SK-N-SH (cell line): ENCODE measurements at regions of chr11 and their contacts with region 1.

Region 1: DNA sequence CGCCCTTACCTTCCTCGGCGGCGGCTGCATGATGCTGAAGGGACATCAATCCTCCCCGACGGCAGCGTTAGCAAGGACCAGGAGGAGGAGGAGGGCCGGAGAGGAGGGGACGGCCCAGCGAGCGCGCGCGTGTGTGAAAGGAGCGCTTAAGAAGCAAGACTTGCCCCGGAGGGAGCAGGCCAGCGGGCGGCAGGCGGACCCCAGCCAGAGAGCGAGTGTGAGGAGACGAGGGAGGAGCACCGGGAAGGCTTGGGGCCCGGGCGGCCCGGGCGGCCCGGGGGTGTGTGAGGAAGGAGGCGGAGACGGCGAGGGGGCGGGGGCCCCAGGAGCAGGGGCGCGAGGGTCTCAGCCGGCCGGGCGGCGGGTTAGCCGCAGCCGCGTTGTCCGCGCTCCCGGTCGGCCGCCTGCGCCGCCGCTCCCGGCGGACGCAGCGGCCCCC is 251 bp downstream of the FCHSD2 start:
- DNase-seq: no peak
- H3K4me3 ChIP-seq: peak overlapping the region; percentile 90 to 97
- H3K27ac ChIP-seq: peak overlapping the region; percentile 79 to 95
- H3K4me1 ChIP-seq: peaks cover 0 to 20% of the 10 kb centered on the region in 2 experiments; a peak in 2 of 4 replicates
- H3K27me3 ChIP-seq: no peaks in the 10 kb centered on the region
- CTCF ChIP-seq: no peak
- EP300 ChIP-seq: no peak
- RAD21 ChIP-seq: no peak

Region 2: GRCh38 chr11:73126804-73127480 is 14.9 kb before region 1 on chr11:
- CTCF ChIA-PET with region 1: interaction called, 11 read pairs
- POLR2A ChIA-PET with region 1: no interaction called
- DNase-seq: no peak
- H3K4me3 ChIP-seq: no peak overlapping the region
- H3K27ac ChIP-seq: no peak overlapping the region; a peak in 1 of 4 replicates
- H3K4me1 ChIP-seq: no peaks in the 10 kb centered on the region; a peak in 3 of 4 replicates
- H3K27me3 ChIP-seq: no peaks in the 10 kb centered on the region
- CTCF ChIP-seq: no peak
- EP300 ChIP-seq: no peak
- RAD21 ChIP-seq: no peak

Region 3: DNA sequence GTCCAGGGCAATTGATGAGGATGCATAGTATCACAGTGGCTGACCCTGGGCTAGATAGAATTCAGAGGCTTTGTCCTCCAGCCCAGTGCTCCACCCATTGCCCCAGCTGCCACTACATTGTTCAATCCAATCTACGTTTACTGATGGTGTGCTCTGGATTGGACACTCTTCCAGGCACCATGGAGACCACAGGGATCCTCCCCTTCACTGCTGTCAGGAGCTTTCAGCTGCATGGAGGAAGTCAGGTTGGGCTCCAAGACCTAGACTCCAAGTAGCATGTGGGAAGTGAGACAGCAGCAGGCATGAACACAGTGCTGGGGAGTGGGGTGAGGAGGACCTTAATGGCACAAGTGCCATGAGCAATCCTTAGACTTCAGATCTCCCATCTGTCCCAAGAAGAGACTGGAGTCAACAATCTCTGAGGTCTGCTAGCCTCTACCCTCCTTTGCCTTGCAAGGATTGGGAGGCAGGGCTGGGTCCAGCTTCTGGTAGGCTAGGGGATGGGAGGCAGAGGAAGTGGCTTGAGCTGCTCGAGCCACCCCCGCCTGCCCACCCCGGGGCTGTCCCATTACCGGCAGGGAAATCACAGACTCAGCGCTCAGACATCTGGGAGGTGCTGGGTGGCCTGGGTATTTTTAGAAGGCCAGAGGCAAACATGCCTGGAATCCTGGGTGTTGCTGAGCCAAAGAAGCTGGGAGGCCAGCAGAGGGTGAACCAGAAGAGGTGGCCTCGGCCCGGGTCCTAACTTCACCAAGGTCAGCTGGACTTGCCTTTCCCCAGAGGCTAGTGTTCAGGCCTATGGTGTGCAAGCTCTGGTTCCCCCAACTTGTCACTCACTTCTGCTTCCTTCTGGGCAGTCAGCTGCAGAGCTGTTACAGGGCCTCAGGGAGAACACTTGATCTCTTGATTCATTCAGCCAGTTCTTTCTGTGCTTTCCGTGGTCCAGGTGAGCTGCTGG is 15.5 kb after region 1 on chr11:
- CTCF ChIA-PET with region 1: interaction called, 14 read pairs
- POLR2A ChIA-PET with region 1: no interaction called
- DNase-seq: peak; percentile 21
- H3K4me3 ChIP-seq: no peak overlapping the region
- H3K27ac ChIP-seq: no peak overlapping the region
- H3K4me1 ChIP-seq: peaks cover 9 to 25% of the 10 kb centered on the region in 2 experiments; a peak in 2 of 4 replicates
- H3K27me3 ChIP-seq: no peaks in the 10 kb centered on the region
- CTCF ChIP-seq: no peak
- EP300 ChIP-seq: no peak
- RAD21 ChIP-seq: no peak

Region 4: DNA sequence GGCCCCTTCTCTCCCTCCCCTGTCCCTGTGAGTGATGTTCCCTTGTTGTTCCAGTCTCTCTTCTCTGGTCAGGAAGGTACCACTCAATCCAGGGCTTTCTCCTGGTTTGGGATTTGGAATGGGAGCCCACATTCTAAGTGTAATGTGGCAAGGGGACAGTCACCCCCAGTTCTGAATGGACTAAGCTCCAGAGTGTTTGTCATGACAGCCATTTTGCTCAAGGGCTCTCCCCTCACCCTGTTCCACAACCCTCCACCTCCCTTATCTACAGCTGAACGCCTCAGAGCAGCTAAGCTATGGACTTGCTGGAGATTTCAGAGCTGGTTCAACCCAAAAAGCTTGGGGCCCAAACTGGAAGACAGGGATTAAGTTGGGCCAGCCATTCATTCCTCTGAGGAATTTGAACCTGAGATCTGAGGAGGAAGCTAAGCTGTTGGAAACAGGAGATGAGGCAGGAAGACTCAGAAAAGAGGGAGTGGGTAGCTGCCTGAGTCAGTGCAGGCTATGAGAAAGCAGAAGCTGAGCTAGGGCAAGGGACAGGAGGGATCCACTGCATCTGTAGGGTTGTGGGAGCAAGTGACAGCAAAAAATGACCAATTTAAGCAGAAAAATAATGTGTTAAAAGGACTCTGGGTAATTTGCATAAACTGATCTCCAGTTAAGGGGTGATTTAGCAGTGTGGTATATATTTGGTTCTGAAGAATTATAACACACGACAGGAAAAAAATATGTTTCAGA is 23.1 kb after region 1 on chr11:
- CTCF ChIA-PET with region 1: interaction called, 11 read pairs
- POLR2A ChIA-PET with region 1: no interaction called
- DNase-seq: no peak
- H3K4me3 ChIP-seq: no peak overlapping the region
- H3K27ac ChIP-seq: no peak overlapping the region
- H3K4me1 ChIP-seq: peaks cover 0 to 2% of the 10 kb centered on the region in 2 experiments; a peak in 1 of 4 replicates
- H3K27me3 ChIP-seq: no peaks in the 10 kb centered on the region
- CTCF ChIP-seq: no peak
- EP300 ChIP-seq: no peak
- RAD21 ChIP-seq: no peak

Region 5: GRCh38 chr11:73612601-73613140 is 470.8 kb after region 1 on chr11:
- CTCF ChIA-PET with region 1: no interaction called
- POLR2A ChIA-PET with region 1: no interaction called
- DNase-seq: no peak
- H3K4me3 ChIP-seq: no peak overlapping the region
- H3K27ac ChIP-seq: no peak overlapping the region
- H3K4me1 ChIP-seq: no peaks in the 10 kb centered on the region
- H3K27me3 ChIP-seq: no peaks in the 10 kb centered on the region
- CTCF ChIP-seq: no peak
- EP300 ChIP-seq: no peak
- RAD21 ChIP-seq: no peak